ENCODE measurements at regions of chr7 and their contacts with region 1.

Region 1: DNA sequence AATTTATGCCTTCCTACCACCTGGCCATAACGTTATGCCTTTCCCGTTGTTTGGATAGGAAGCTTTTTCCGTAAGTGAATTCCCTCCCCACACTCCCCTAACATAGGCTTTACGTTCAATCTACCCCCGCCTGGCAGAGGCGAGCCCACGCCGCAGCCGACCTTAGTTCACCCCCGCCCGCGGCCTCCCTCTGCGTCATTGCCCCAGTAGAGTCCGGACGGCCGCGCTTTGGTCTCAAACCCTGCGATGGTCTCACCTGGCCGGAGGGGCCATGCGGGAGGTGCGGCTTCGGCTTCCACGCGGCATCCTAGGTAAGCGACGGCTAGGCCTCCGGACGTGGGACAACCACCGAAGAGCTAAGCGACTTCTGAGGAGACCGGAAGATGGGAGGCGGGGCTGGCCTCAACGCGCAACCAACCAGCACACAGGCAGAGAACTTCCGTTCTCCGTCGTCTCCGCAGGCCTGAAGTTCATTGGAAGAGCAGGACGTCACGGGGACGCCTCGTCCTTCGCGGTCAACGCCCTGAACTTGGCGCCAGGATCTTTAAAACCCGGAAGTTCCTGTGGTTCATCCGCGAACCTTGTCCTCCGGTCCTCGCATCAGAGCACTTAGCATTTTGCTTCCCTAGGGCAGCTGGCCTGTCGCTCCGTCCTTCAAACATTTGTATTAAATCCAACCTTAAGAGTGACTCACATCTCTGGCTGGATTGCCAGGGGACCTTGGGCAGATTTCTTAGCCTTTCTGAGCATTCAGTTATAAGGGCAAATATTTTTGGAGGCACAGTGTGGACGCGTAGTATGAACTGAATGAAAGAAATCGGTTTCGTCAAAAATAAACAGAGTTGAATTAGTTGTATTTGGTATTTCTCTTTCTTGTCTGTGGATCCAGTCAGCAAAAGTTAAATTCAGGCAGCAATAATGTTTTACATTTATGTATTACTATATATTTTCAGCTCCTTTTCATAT is at the start of gene CHCHD2:
- DNase-seq: peak; percentile 95
- ATAC-seq: peak; percentile 99
- H3K4me3 ChIP-seq: peak within 1 kb of the TSS; percentile 87
- H3K27ac ChIP-seq: peak within 1 kb of the TSS; percentile 94
- H3K4me1 ChIP-seq: no peaks in the 10 kb centered on the region
- H3K27me3 ChIP-seq: no peaks in the 10 kb centered on the region
- CTCF ChIP-seq: no peak
- EP300 ChIP-seq: 0 out of 4 replicates have a peak, but pooled peaks of 1 of the 2 experiments have one; percentile 6
- POLR2A ChIP-seq: peak; percentile 96
- RAD21 ChIP-seq: no peak
- polyA plus RNA-seq, gene CHCHD2: 97.8 to 374 TPM

Region 2: GRCh38 chr7:54758702-54759592 is 1347.4 kb before region 1 on chr7 and contains the start of gene SEC61G:
- CTCF ChIA-PET with region 1: no interaction called
- POLR2A ChIA-PET with region 1: no interaction called
- RAD21 ChIA-PET with region 1: no interaction called
- SMC1A ChIA-PET with region 1: no interaction called
- in situ Hi-C with region 1: loop called (anchors 10 kb)
- intact Hi-C with region 1: no loop called
- DNase-seq: peak; percentile 90
- ATAC-seq: peak; percentile 96
- H3K4me3 ChIP-seq: peak within 1 kb of the TSS; percentile 97
- H3K27ac ChIP-seq: peak within 1 kb of the TSS; percentile 78
- H3K4me1 ChIP-seq: no peaks in the 10 kb centered on the region
- H3K27me3 ChIP-seq: no peaks in the 10 kb centered on the region
- CTCF ChIP-seq: no peak
- EP300 ChIP-seq: no peak
- POLR2A ChIP-seq: peak; percentile 92
- RAD21 ChIP-seq: no peak
- polyA plus RNA-seq, gene SEC61G: 709 to 809 TPM

Region 3: DNA sequence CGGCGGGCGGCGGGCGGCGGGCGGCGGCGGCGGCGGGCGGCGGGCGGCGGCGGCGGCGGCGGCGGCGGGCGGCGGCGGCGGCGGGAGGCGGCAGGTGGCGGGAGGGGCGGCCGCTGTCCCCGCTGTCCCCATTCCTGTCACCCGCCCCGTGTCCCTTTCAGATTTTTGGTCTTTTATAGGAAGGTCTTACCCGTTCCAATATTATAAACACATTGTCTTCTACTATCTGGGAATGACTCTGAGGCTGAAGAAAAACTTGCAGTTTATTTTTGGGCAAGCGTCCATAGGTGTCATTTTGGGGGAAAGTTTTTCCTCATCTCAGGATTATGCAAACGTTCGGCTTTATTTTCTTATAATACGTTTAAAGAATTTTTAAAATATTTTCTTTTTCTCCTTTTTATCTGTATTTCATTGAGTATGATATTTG is 218.6 kb before region 1 on chr7:
- CTCF ChIA-PET with region 1: no interaction called
- POLR2A ChIA-PET with region 1: no interaction called
- RAD21 ChIA-PET with region 1: no interaction called
- SMC1A ChIA-PET with region 1: no interaction called
- in situ Hi-C with region 1: no loop called
- intact Hi-C with region 1: loop called (anchors 10 kb)
- DNase-seq: no peak
- ATAC-seq: no peak
- H3K4me3 ChIP-seq: peak overlapping the region; percentile 57; the same call in 1 of the 2 replicates
- H3K27ac ChIP-seq: no peak overlapping the region
- H3K4me1 ChIP-seq: no peaks in the 10 kb centered on the region
- H3K27me3 ChIP-seq: no peaks in the 10 kb centered on the region
- CTCF ChIP-seq: no peak
- EP300 ChIP-seq: no peak
- POLR2A ChIP-seq: no peak
- RAD21 ChIP-seq: no peak

Region 4: DNA sequence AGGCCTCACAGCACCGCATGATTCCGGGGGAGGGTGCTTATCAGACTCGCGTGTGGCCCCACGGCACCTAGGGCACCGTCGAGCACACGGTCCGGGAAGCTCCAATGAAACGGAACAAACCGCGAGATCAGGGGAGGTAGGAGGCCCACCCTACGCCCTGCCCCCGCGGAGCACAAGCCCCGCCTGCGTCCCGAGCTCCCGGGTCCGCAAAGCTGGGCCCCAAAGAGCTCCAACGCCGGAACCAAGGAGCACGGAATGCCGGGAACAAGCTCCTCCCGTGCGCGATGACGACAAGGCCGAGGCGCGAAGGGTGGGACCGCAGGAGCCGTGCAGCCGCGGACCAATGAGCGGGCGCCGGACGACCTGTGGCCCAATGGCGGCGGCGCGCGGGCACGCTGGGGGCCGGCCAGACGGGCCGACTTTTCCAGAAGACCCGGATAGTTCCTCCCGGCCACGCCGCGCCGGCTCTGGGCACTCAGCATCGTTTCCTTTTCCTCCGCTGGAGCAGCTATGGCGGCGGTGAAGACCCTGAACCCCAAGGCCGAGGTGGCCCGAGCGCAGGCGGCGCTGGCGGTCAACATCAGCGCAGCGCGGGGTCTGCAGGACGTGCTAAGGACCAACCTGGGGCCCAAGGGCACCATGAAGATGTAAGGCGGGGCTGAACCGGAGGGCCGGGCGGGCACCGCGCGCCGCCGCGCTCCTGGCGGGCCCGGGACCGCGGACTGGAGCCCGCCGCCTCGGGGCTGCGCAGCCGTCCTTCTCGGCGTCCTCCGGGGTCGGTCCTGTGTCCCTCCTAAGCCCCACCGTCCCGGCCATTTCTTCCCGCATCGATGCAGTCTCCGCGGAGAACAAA is 54.8 kb before region 1 on chr7 and contains the starts of genes CCT6A and PSPH:
- CTCF ChIA-PET with region 1: no interaction called
- POLR2A ChIA-PET with region 1: interaction called, 13 read pairs
- RAD21 ChIA-PET with region 1: no interaction called
- SMC1A ChIA-PET with region 1: interaction called, 3 read pairs
- in situ Hi-C with region 1: no loop called
- intact Hi-C with region 1: no loop called
- DNase-seq: peak; percentile 87
- ATAC-seq: peak; percentile 94
- H3K4me3 ChIP-seq: peak within 1 kb of the TSS; percentile 86
- H3K27ac ChIP-seq: peak within 1 kb of the TSS; percentile 83
- H3K4me1 ChIP-seq: peaks cover 14% of the 10 kb centered on the region
- H3K27me3 ChIP-seq: no peaks in the 10 kb centered on the region
- CTCF ChIP-seq: no peak
- EP300 ChIP-seq: no peak
- POLR2A ChIP-seq: peak; percentile 91
- RAD21 ChIP-seq: no peak
- polyA plus RNA-seq, gene CCT6A: 191 to 319 TPM
- polyA plus RNA-seq, gene PSPH: 5.2 to 10.5 TPM

Measured in GM12878 (cell line).